ENCODE measurements at regions of chr2 and their contacts with region 1.

Region 1: DNA sequence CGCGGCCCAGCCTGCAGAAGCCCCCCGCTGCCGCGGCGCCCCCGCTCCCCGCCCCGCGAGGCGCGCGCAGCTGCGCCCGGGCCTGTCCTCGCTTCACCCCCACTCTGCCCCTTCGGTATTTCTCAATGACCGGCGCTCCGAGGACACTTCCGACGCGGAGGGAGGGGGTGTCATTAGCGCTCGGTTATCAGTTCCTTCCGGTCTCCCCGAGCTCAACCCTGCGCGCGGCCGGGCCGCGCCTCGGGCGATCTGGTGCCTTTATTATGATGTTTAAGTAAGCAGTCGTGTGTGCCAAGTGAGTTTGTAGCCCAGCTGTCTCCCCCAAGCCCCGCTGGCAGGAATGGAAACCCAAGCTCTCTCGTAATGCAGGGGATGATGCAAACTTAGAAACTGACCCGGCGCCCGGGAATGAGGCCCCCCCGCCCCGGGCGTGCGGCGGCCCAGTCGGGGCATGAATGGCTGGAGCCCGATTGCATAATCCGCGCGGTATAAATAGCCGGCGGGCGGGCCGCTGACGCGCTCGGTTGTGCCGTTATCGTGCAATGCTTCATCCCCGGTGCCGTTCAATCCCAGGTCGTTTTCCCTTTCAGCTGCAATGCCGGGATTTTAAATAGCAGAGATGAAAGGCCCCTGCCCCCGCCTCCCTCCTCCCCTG is 3.9 kb upstream of the SPRED2 start:
- DNase-seq: peak; percentile 83 to 98
- H3K4me3 ChIP-seq: peak overlapping the region; percentile 72
- CTCF ChIP-seq: no peak
- POLR2A ChIP-seq: no peak

Region 2: GRCh38 chr2:65300761-65301711 is 135.3 kb before region 1 on chr2:
- intact Hi-C with region 1: loop called (anchors 5 kb)
- DNase-seq: no peak
- H3K4me3 ChIP-seq: no peak overlapping the region
- CTCF ChIP-seq: no peak
- POLR2A ChIP-seq: no peak

Region 3: GRCh38 chr2:65918760-65919187 is 482.5 kb after region 1 on chr2:
- intact Hi-C with region 1: no loop called
- DNase-seq: no peak
- H3K4me3 ChIP-seq: no peak overlapping the region
- CTCF ChIP-seq: no peak
- POLR2A ChIP-seq: no peak